ENCODE measurements at regions of chr5 and their contacts with region 1.

Region 1: DNA sequence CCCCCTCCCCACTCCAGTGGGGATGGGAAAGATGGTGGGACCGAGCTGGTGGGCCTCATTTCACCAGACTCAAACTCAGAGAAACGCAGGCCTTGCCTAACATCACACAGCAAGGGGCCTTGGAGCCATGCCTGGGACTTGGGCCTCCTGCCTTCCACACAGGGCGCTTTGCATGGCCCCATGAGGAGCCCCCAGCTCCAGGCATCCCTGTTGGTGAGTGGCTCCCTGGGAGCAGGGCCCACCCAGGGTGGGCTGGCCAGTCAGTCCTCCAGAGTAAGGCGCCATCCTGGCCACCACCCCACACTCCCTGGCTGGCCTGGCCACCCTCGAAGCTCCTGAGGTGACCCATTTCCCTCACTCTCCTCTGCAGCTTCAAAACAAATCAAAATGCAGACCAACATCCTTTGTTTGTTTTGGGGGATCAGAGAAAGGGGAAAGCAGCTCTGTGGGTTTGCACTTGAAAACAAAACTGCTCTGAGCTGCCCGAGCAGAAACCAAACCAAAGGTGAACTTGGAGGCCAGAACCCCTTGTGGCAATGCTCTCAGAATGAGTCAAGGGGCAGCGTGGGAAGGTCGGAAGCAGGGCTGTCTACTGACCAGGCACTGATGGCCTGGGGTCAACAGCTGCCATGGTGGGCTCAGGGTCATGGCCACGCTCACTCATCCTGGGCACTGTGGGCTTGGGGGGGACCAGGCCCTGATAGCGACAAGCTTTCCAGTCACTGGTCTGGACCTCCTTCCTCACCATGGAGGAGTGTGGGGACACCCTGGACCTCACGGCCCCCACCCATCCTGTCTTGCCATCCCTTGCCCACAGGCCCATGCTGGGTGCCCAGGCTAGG is 37.0 kb upstream of the VDAC1 start:
- DNase-seq: no peak
- H3K4me3 ChIP-seq: no peak overlapping the region
- H3K4me3 Mint-ChIP-seq: peak overlapping the region in 4 of 8 donors; percentile 21 to 67 (median 29)
- H3K27ac ChIP-seq: no peak overlapping the region
- H3K27ac Mint-ChIP-seq: peak overlapping the region in 5 of 7 donors; percentile 30 to 80 (median 74)
- H3K4me1 ChIP-seq: peaks cover 40% of the 10 kb centered on the region
- H3K4me1 Mint-ChIP-seq: peaks cover 16 to 53% (median 38%) of the 10 kb centered on the region in 4 donors
- H3K27me3 ChIP-seq: no peaks in the 10 kb centered on the region
- H3K27me3 Mint-ChIP-seq: no peaks in the 10 kb centered on the region

Region 2: DNA sequence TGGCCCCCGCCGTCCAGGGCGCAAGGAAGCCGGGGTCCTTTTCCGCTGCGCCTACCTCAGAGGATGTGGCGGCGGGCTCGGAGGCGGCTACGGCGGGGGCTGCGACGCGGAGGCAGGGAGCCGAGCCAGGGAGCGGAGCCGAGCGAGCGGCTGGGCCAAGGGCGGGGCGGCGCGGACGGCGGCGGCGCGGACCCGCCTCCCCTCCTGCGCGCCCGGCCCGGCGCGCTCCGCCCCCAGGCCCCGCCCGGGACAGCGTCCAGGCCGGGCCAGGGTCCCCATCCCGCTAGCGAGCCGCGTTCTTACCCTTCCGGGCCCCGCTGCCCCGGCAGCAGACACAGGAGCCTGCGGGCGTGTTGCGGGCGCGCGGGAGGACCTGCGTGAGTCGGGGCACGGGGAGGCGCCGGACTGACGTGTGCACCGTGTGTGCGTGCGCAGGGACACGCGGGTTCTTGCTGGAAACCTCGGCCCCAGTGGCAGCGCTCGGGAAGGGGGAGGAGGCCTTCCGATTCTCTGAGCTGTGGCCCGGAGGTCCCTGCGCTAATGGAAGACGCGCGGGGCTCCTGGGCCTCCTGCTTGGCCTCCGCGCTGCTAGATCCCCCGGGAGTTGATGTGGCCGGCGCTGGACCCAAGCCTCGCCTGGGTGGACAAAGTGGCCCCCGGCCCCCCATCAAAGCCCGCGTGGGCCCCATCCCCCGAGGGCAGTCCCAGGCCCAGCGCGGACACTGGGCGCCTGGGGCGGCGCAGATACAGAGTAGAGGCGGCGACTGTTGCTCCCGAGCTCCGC is 37.0 kb before region 1 on chr5 and contains the start of gene VDAC1:
- CTCF ChIA-PET with region 1: interaction called, 11 read pairs
- POLR2A ChIA-PET with region 1: interaction called, 4 read pairs
- intact Hi-C with region 1: no loop called
- DNase-seq: peak; percentile 89 to 95 (median 92)
- H3K4me3 ChIP-seq: peak within 1 kb of the TSS; percentile 61 to 81
- H3K4me3 Mint-ChIP-seq: peak within 1 kb of the TSS; percentile 89 to 99 (median 93)
- H3K27ac ChIP-seq: peak within 1 kb of the TSS; percentile 96
- H3K27ac Mint-ChIP-seq: peak within 1 kb of the TSS; percentile 96 to 99 (median 98)
- H3K4me1 ChIP-seq: peaks cover 49% of the 10 kb centered on the region
- H3K4me1 Mint-ChIP-seq: peaks cover 26 to 50% (median 38%) of the 10 kb centered on the region in 4 donors
- H3K27me3 ChIP-seq: no peaks in the 10 kb centered on the region
- H3K27me3 Mint-ChIP-seq: no peaks in the 10 kb centered on the region
- total RNA-seq, gene VDAC1: 45.1 to 46.4 TPM

Region 3: DNA sequence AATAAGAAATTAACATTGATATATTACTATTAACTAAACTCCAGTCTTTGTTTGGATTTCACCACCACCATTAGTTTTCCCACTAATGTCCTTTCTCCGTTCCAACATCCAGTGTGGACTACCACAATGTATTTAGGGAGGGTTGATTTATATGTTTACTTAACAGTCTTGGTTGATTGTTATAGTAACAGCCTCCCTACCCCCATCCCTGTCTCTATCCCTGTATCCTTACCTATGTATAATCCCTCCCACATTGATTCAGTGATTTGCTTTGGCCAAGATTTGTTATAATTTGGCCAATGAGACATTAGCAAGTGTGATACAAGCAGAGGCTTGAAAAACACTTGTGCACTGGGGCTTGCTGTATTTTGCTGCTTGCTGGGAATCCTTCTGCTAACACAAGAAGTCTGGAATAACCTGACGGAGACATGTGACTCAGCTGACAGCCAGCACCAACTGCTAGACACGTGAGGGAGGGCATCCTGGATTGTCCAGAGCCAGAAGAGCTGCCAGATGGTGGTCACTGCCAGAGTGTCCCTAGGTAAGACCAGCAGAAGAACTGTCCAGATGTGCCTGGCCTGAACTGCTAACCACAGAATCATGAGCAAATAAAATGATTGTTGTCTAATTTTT is 21.5 kb after region 1 on chr5:
- CTCF ChIA-PET with region 1: interaction called, 21 read pairs
- POLR2A ChIA-PET with region 1: interaction called, 8 read pairs
- intact Hi-C with region 1: no loop called
- DNase-seq: no peak
- H3K4me3 ChIP-seq: no peak overlapping the region
- H3K4me3 Mint-ChIP-seq: no peak overlapping the region
- H3K27ac ChIP-seq: no peak overlapping the region
- H3K27ac Mint-ChIP-seq: peak overlapping the region in 2 of 7 donors; percentile 42 to 48
- H3K4me1 ChIP-seq: peaks cover 7% of the 10 kb centered on the region
- H3K4me1 Mint-ChIP-seq: peaks cover 3 to 13% (median 8%) of the 10 kb centered on the region in 4 donors
- H3K27me3 ChIP-seq: no peaks in the 10 kb centered on the region
- H3K27me3 Mint-ChIP-seq: no peaks in the 10 kb centered on the region

Region 4: DNA sequence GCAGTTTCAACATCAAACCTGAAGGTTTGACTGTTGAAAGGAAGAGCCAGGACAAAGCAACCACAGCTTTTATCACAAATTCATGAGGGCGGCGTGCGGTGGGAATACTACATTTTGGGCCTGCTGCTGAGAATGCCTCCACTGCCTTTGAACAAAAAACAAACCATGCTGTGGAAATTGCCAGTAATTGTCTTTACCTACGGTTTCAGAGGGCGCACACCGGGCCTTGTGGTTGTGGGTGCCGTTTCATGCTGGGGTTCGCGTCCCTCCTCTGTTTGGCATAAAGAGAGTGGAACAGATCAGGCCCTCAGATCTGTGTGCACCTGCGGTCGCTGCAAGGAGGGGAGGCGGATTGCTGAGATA is 45.1 kb after region 1 on chr5:
- CTCF ChIA-PET with region 1: interaction called, 25 read pairs
- POLR2A ChIA-PET with region 1: interaction called, 31 read pairs
- intact Hi-C with region 1: loop called (anchors 2 kb)
- DNase-seq: peak; percentile 82 to 92 (median 89)
- H3K4me3 ChIP-seq: peak overlapping the region in 1 of 2 donors; percentile 12
- H3K4me3 Mint-ChIP-seq: peak overlapping the region; percentile 68 to 88 (median 76)
- H3K27ac ChIP-seq: peak overlapping the region; percentile 52
- H3K27ac Mint-ChIP-seq: peak overlapping the region; percentile 94 to 99 (median 97)
- H3K4me1 ChIP-seq: peaks cover 98% of the 10 kb centered on the region
- H3K4me1 Mint-ChIP-seq: peaks cover 61 to 94% (median 78%) of the 10 kb centered on the region in 4 donors
- H3K27me3 ChIP-seq: no peaks in the 10 kb centered on the region
- H3K27me3 Mint-ChIP-seq: no peaks in the 10 kb centered on the region

Region 5: GRCh38 chr5:134113902-134114875 is 72.4 kb after region 1 on chr5 and contains the start of gene TCF7:
- CTCF ChIA-PET with region 1: no interaction called
- POLR2A ChIA-PET with region 1: interaction called, 192 read pairs
- intact Hi-C with region 1: loop called (anchors 1 kb)
- DNase-seq: peak; percentile 78 to 83 (median 81)
- H3K4me3 ChIP-seq: peak within 1 kb of the TSS; percentile 92 to 97
- H3K4me3 Mint-ChIP-seq: peak within 1 kb of the TSS; percentile 96 to 99 (median 97)
- H3K27ac ChIP-seq: peak within 1 kb of the TSS; percentile 97
- H3K27ac Mint-ChIP-seq: peak within 1 kb of the TSS; percentile 94 to 98 (median 97)
- H3K4me1 ChIP-seq: peaks cover 68% of the 10 kb centered on the region
- H3K4me1 Mint-ChIP-seq: peaks cover 38 to 80% (median 53%) of the 10 kb centered on the region in 4 donors
- H3K27me3 ChIP-seq: no peaks in the 10 kb centered on the region
- H3K27me3 Mint-ChIP-seq: no peaks in the 10 kb centered on the region
- total RNA-seq, gene TCF7: 770 to 841 TPM

Region 6: DNA sequence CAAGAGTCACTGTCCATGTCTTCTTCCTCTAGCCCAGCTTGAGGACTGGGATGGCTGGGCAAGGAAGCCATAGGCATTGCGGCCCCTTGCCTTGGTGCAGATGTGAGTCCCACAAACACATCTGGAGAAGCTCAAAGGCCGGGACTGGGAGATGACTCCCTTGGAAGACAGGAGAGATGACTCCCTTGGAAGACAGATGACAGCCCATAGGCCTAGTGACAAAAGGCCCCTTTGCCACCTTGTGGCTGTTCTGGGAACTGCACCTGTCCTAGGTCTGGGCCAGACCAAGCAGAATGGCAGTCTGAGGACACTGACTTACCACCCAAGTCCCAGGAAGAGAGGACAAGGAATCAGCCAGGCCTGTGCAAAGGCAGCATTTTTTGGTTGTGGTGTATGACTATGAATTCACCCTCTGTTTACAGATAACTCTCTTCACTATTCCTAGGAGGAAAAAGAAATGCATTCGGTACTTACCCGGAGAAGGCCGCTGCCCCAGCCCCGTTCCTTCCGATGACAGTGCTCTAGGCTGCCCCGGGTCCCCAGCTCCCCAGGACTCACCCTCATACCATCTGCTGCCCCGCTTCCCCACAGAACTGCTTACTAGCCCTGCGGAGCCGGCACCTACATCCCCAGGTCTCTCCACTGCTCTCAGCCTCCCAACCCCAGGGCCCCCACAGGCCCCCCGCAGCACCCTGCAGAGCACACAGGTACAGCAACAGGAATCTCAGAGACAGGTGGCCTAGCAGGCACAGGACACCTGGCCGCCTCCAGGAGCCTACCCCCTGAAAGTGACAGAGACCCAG is 104.2 kb after region 1 on chr5:
- CTCF ChIA-PET with region 1: interaction called, 603 read pairs
- POLR2A ChIA-PET with region 1: interaction called, 313 read pairs
- intact Hi-C with region 1: loop called (anchors 1 kb)
- DNase-seq: peak; percentile 74 to 83 (median 77)
- H3K4me3 ChIP-seq: no peak overlapping the region
- H3K4me3 Mint-ChIP-seq: peak overlapping the region in 2 of 8 donors; percentile 26 to 30
- H3K27ac ChIP-seq: no peak overlapping the region
- H3K27ac Mint-ChIP-seq: peak overlapping the region; percentile 11 to 98 (median 89)
- H3K4me1 ChIP-seq: peaks cover 24% of the 10 kb centered on the region
- H3K4me1 Mint-ChIP-seq: peaks cover 26 to 70% (median 44%) of the 10 kb centered on the region in 4 donors
- H3K27me3 ChIP-seq: no peaks in the 10 kb centered on the region
- H3K27me3 Mint-ChIP-seq: no peaks in the 10 kb centered on the region

Region 7: DNA sequence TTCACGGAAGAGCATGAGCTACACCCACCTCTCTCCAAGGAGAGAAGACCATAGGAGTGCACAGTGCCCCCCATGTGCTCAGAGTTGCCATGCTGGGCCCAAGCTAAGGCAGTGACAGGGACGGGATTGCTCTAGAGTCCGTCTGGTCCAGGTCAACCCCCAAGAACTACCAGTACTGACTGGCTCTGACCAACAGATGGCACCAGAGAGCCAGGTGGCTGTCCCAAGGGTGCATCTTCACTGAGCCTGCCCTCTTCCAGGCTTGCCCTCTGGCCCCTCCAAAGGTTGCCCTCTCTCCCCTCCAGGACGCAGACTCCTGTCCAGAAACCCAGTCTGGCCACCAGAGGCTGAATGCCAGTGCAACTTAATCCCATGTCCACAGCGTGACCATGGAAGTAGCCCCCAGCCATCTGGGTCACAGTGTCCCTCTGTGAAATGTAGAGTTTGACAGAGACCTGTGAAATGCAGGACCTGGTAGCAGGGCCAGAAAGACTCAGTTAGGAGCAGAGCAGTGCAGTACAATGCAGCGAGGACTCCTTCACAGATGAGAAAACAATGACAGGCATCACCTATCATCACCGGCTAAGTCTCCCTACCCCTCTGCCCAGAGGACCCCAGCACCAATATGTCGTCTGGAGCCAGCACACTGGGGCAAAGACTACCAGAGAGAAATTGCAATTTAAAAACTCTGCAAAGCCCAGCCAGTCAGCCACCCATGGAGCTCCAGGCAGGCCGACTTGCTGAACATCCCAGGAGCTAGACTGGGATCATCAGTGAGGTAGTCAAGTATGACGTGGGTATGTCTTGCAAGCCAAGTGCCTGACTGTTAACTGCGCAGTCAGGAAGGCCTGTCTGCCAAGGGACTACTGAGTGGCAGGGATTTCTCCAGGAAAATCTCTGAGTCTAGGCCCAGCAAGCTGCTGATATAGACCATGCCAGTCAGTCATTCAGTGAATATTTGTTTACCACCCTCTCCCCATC is 142.7 kb after region 1 on chr5:
- CTCF ChIA-PET with region 1: interaction called, 12 read pairs
- POLR2A ChIA-PET with region 1: interaction called, 3 read pairs
- intact Hi-C with region 1: no loop called
- DNase-seq: peak; percentile 72 to 79 (median 74)
- H3K4me3 ChIP-seq: no peak overlapping the region
- H3K4me3 Mint-ChIP-seq: no peak overlapping the region
- H3K27ac ChIP-seq: no peak overlapping the region
- H3K27ac Mint-ChIP-seq: peak overlapping the region in 3 of 7 donors; percentile 21 to 63 (median 50)
- H3K4me1 ChIP-seq: no peaks in the 10 kb centered on the region
- H3K4me1 Mint-ChIP-seq: peaks cover 0 to 3% (median 1%) of the 10 kb centered on the region in 4 donors
- H3K27me3 ChIP-seq: no peaks in the 10 kb centered on the region
- H3K27me3 Mint-ChIP-seq: no peaks in the 10 kb centered on the region

Measured in CD4-positive, alpha-beta memory T cell (primary cell).